Stomach (tissue), 19 donors: ENCODE measurements at regions of chr3 and their contacts with region 1.

Region 1: DNA sequence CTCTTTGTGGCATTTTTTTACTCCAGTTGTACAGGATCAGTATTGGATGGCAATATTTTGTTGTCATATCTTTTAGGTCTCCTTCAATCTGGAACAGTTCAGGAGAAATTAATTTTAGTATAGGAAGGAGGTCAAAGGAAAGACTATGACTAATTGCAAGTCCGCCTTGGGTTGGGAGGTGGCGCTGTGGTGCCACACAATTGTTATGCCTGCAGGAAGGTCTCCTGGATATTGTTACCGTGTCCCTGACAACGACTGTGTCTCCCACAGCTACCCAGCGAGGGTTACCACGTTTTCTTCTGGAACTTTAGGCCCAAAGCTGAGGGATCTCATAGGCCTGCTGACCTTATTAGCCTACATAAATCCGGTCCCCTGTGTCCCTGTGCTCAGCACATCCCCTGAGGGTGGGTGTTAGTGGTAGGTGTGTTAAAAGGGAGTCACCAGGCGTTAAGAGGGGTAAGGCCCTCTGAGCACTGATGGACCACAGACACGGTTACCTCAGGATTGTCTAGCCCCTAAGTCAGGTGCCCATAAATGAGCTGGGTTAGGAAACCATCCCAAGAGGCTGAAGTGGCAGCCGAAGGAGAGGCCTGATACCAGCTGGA is 31.5 kb downstream of the KCNAB1 start:
- DNase-seq: peak; percentile 74 to 90
- H3K4me3 ChIP-seq: no peak overlapping the region
- H3K27ac ChIP-seq: no peak overlapping the region
- H3K4me1 ChIP-seq: peaks cover 7 to 29% (median 15%) of the 10 kb centered on the region in 4 donors
- H3K27me3 ChIP-seq: no peaks in the 10 kb centered on the region
- CTCF ChIP-seq: peak in 5 of 7 experiments; percentile 59 to 71 (median 67)
- EP300 ChIP-seq: no peak
- POLR2A ChIP-seq: no peak

Region 2: DNA sequence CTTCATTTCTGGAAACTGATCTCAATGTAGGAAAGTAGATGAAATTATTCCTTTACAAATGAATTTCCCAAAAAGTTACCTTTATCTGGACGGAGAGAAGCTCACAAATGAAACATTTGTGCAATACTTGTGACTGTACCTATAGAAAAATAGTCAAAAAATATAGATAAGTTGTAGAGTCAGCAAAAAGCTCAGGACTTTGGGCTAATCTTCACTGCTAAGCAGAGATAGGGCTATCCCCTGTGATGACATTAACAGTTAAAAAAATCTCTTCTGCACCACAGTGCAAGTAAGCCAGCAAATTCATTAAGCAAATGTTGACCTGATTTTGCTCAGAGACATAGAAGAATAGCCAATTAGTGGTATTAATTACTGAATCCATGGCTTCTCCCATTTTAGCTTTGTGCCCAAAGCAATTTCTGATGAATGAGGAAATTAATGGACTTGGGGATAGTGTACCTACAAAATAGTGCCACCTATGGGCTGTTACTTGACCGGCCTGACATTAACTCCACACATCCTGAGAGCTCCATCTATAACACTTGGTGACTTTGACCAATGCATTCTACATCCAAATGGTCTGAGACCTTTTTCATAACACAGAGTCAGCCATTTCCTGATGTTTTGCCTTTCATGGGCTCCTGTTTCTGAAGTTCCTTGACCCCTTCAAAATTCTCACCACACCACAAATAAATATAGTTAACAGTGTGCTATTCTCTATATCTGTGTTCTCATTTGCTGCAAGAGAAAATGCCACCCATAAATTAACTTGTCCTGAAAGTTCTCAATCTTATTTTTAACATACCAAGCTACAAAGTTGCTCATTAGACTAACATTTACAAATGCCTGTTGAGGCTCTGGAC is 298.0 kb after region 1 on chr3:
- intact Hi-C with region 1: loop called (anchors 10 kb)
- DNase-seq: peak in 1 of 2 donors; percentile 60
- H3K4me3 ChIP-seq: no peak overlapping the region
- H3K27ac ChIP-seq: no peak overlapping the region
- H3K4me1 ChIP-seq: no peaks in the 10 kb centered on the region
- H3K27me3 ChIP-seq: no peaks in the 10 kb centered on the region
- CTCF ChIP-seq: peak in 5 of 7 experiments; percentile 14 to 53 (median 49)
- EP300 ChIP-seq: no peak
- POLR2A ChIP-seq: no peak

Region 3: DNA sequence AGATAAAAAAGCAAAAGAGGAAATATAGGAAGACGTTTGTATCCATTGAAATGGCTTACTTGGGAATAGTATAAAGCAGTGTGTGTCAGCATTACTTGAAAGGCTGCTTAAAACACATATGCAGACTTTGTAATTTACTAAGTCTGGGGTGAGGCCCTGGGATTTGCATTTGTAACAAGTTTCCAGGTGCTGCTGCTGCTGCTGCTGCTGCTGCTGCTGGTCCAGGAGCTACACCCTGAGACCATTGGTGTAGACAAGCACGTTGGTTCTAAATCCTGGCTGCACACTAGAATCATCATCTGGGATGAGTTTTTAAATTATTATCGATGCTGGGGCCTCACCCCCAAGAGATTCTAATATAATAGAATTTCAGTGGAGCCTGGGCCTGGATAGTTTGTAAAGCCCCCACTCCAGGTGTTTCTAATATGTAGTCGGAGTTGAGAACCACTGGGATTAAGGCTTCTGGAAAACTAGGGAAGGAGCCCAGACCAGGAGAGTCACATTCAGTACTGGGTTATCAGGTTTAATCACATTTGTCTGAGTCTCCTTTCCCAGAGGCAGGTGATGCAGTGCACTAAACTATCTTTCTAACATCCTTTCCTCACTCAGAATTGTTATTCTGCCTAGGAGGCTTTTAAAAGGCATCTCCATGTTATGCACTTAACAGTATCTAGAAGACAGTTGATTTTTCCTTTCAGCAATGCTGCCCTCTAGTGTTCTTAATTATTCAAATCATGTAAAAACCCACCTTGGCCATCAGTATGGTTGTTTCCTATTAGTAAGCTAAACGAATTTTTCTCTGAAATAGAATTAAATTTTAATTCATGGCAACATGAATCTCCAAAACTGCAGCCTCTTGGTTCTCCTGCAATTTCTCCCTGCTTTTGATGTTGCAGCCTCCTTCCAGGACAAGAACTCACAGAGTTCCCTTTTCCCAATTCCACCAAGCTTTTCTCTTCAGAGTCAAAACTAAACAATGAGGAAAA is 357.6 kb after region 1 on chr3:
- intact Hi-C with region 1: loop called (anchors 5 kb)
- DNase-seq: peak in 1 of 2 donors; percentile 80
- H3K4me3 ChIP-seq: no peak overlapping the region
- H3K27ac ChIP-seq: no peak overlapping the region
- H3K4me1 ChIP-seq: peaks cover 0 to 16% (median 4%) of the 10 kb centered on the region in 4 donors
- H3K27me3 ChIP-seq: no peaks in the 10 kb centered on the region
- CTCF ChIP-seq: peak in 5 of 7 experiments; percentile 18 to 62 (median 36)
- EP300 ChIP-seq: no peak
- POLR2A ChIP-seq: no peak